GM12878 (cell line): ENCODE measurements at regions of chr2 and their contacts with region 1.

Region 1: GRCh38 chr2:113965644-113966043 is 75.8 kb downstream of the ACTR3 start:
- DNase-seq: no peak
- ATAC-seq: peak; percentile 91
- H3K4me3 ChIP-seq: no peak overlapping the region
- H3K27ac ChIP-seq: no peak overlapping the region
- H3K4me1 ChIP-seq: no peaks in the 10 kb centered on the region
- H3K27me3 ChIP-seq: no peaks in the 10 kb centered on the region
- CTCF ChIP-seq: peak; percentile 57 to 65 (median 64); a peak in 5 of 6 replicates
- EP300 ChIP-seq: no peak
- POLR2A ChIP-seq: peak; percentile 52
- RAD21 ChIP-seq: peak; percentile 47; the same call in 1 of the 2 replicates

Region 2: DNA sequence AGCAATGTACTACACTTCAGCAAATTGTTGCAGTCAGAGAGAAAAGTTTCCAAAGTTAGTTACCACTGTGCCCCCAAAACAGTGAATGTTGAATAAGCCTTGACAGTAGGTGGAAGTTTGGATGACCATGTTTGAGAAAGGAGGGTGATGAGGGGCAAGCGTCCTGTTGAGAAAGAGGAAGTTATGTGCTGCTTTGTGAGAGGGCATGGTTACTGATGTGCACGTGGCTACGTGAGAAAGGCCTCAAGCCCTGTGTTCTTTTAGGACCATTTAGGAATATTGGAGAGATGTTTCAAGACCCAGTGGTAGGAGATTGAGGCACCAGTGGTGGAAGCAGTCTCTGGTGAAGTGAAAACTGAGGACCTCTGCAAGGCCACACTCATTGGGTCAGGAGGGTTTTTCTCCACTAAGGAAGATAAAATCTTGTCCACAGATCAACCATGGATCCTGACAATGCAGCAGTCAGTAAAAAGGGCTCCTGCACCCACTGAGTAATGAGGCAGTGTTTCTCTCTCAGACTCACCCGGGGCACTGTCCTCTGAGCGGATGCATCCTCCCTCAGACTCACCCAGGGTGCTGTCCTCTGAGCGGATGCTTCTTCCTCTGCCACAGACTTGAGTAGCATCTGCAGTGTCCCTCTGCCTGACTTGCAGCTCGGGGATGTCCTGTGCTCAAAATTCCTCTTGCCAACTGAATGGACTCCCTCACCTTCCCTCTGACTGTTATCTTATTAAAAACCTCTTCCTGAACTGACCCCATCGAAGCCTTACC is 110.5 kb before region 1 on chr2:
- CTCF ChIA-PET with region 1: no interaction called
- POLR2A ChIA-PET with region 1: no interaction called
- RAD21 ChIA-PET with region 1: no interaction called
- SMC1A ChIA-PET with region 1: no interaction called
- in situ Hi-C with region 1: no loop called
- intact Hi-C with region 1: no loop called
- DNase-seq: no peak
- ATAC-seq: peak; percentile 52
- H3K4me3 ChIP-seq: no peak overlapping the region
- H3K27ac ChIP-seq: no peak overlapping the region; the same call in 1 of the 2 replicates
- H3K4me1 ChIP-seq: peaks cover 26% of the 10 kb centered on the region
- H3K27me3 ChIP-seq: no peaks in the 10 kb centered on the region
- CTCF ChIP-seq: no peak
- EP300 ChIP-seq: no peak
- POLR2A ChIP-seq: no peak
- RAD21 ChIP-seq: no peak

Region 3: GRCh38 chr2:113940891-113941290 is 24.8 kb before region 1 on chr2:
- CTCF ChIA-PET with region 1: interaction called, 11 read pairs
- POLR2A ChIA-PET with region 1: interaction called, 3 read pairs
- RAD21 ChIA-PET with region 1: no interaction called
- SMC1A ChIA-PET with region 1: interaction called, 6 read pairs
- in situ Hi-C with region 1: no loop called
- intact Hi-C with region 1: no loop called
- DNase-seq: no peak
- ATAC-seq: no peak
- H3K4me3 ChIP-seq: no peak overlapping the region
- H3K27ac ChIP-seq: no peak overlapping the region
- H3K4me1 ChIP-seq: no peaks in the 10 kb centered on the region
- H3K27me3 ChIP-seq: no peaks in the 10 kb centered on the region
- CTCF ChIP-seq: no peak
- EP300 ChIP-seq: no peak
- POLR2A ChIP-seq: no peak
- RAD21 ChIP-seq: no peak

Region 4: GRCh38 chr2:113977660-113978523 is 12.2 kb after region 1 on chr2:
- CTCF ChIA-PET with region 1: interaction called, 20 read pairs
- POLR2A ChIA-PET with region 1: no interaction called
- RAD21 ChIA-PET with region 1: interaction called, 5 read pairs
- SMC1A ChIA-PET with region 1: interaction called, 12 read pairs
- in situ Hi-C with region 1: no loop called
- intact Hi-C with region 1: no loop called
- DNase-seq: no peak
- ATAC-seq: peak; percentile 18
- H3K4me3 ChIP-seq: no peak overlapping the region
- H3K27ac ChIP-seq: no peak overlapping the region
- H3K4me1 ChIP-seq: no peaks in the 10 kb centered on the region
- H3K27me3 ChIP-seq: no peaks in the 10 kb centered on the region
- CTCF ChIP-seq: peak in 1 of 3 experiments; percentile 12; a peak in 1 of 6 replicates
- EP300 ChIP-seq: no peak
- POLR2A ChIP-seq: no peak; the same call in 1 of the 2 replicates
- RAD21 ChIP-seq: no peak

Region 5: GRCh38 chr2:113996671-113997594 is 31.3 kb after region 1 on chr2:
- CTCF ChIA-PET with region 1: no interaction called
- POLR2A ChIA-PET with region 1: no interaction called
- RAD21 ChIA-PET with region 1: no interaction called
- SMC1A ChIA-PET with region 1: no interaction called
- in situ Hi-C with region 1: no loop called
- intact Hi-C with region 1: no loop called
- DNase-seq: no peak
- ATAC-seq: peak; percentile 51
- H3K4me3 ChIP-seq: no peak overlapping the region
- H3K27ac ChIP-seq: no peak overlapping the region
- H3K4me1 ChIP-seq: no peaks in the 10 kb centered on the region
- H3K27me3 ChIP-seq: no peaks in the 10 kb centered on the region; a peak in 1 of 4 replicates
- CTCF ChIP-seq: peak in 1 of 3 experiments; percentile 8; a peak in 1 of 6 replicates
- EP300 ChIP-seq: no peak
- POLR2A ChIP-seq: no peak
- RAD21 ChIP-seq: no peak